ENCODE measurements at regions of chr5 and their contacts with region 1.

Region 1: GRCh38 chr5:154179846-154180710 is 10.5 kb upstream of the GALNT10 start:
- DNase-seq: peak in 1 of 2 experiments; percentile 51
- H3K4me3 ChIP-seq: no peak overlapping the region
- H3K27ac ChIP-seq: no peak overlapping the region
- H3K4me1 ChIP-seq: peaks cover 22% of the 10 kb centered on the region
- H3K27me3 ChIP-seq: no peaks in the 10 kb centered on the region
- CTCF ChIP-seq: peak; percentile 89

Region 2: GRCh38 chr5:154081246-154081645 is 98.8 kb before region 1 on chr5:
- CTCF ChIA-PET with region 1: no interaction called
- POLR2A ChIA-PET with region 1: no interaction called
- intact Hi-C with region 1: no loop called
- DNase-seq: no peak
- H3K4me3 ChIP-seq: no peak overlapping the region
- H3K27ac ChIP-seq: no peak overlapping the region
- H3K4me1 ChIP-seq: peaks cover 40% of the 10 kb centered on the region
- H3K27me3 ChIP-seq: no peaks in the 10 kb centered on the region
- CTCF ChIP-seq: no peak

Region 3: GRCh38 chr5:154092356-154093141 is 87.5 kb before region 1 on chr5:
- CTCF ChIA-PET with region 1: interaction called, 4 read pairs
- POLR2A ChIA-PET with region 1: no interaction called
- intact Hi-C with region 1: loop called (anchors 5 kb)
- DNase-seq: peak; percentile 56 to 83
- H3K4me3 ChIP-seq: no peak overlapping the region
- H3K27ac ChIP-seq: peak overlapping the region; percentile 33; the same call in 1 of the 2 replicates
- H3K4me1 ChIP-seq: peaks cover 37% of the 10 kb centered on the region
- H3K27me3 ChIP-seq: no peaks in the 10 kb centered on the region
- CTCF ChIP-seq: no peak

Region 4: GRCh38 chr5:154144226-154144625 is 35.9 kb before region 1 on chr5:
- CTCF ChIA-PET with region 1: interaction called, 10 read pairs
- POLR2A ChIA-PET with region 1: no interaction called
- intact Hi-C with region 1: no loop called
- DNase-seq: no peak
- H3K4me3 ChIP-seq: no peak overlapping the region
- H3K27ac ChIP-seq: no peak overlapping the region
- H3K4me1 ChIP-seq: no peaks in the 10 kb centered on the region
- H3K27me3 ChIP-seq: no peaks in the 10 kb centered on the region
- CTCF ChIP-seq: no peak